Posterior vena cava (tissue), 2 donors: ENCODE measurements at regions of chr14 and their contacts with region 1.

Region 1: DNA sequence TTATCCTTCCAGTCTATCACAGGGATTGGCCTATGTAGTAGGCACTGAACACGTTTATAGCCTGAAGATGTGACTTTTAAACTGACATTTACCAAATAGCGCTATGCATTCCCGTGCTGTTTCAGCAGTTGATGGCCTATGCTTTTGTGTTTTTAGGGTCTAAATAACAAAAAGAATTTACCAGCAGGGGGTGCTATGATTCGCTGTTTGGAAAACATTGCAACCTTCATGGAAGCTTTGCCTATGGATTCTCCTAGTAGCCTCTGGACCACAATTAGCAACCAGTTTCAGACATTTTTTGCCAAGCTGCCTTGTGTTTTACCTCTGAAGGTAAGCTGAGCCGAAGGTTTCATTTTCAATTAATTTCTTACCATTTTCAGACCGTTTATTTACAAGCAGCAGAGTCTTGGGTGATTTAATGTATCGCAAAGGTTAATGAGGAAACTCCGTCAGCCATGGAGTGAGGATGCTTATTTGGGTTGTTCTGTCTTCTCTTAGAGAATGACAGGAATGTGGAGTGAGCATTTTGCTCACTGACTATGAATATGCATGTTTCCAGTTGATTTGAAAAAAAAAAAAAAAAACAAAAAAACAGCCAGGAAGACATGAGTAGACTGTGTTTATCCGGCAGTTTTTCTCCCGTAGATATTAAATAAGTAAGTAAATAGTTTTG is 133.1 kb downstream of the PRIMA1 start:
- DNase-seq: no peak

Region 2: DNA sequence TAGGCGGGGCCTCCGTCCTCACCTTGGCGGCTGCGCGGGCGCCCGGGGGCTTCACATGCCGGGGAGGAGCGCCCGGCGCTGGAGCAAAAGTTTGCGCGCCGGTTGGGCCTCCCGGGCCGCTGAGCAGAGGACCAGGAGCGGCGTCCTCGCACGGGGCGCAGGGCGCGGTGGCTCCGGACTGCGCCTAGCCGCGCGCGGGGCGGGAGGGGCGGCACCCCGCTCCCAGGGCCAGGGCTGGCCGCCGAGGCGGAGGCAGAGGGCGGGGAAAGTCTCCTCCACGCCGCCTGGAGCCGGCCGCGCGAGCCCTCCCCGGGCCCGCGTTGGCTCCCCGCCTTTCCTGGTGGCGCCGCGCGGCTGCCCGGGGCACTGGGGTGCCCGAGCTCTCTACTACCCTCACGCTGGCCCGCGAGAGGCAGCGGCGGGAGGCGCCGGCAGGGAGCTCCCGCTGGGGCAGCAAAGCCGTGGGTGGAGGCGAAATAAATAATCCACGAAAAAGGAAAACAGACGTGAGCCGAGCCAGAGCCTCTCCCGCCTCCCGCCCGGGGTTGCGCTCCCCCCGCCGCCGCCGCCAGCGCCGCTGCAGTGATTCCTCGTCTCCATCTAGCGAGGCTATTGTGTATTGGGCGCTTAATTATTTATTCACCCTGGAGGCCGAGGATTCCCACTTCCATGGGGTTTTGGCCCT is 133.5 kb after region 1 on chr14:
- intact Hi-C with region 1: loop called (anchors 2 to 5 kb)
- DNase-seq: no peak